Ovary (tissue), 10 donors: ENCODE measurements at regions of chr12 and their contacts with region 1.

Region 1: GRCh38 chr12:44728566-44728965 is 147.5 kb downstream of the NELL2 start:
- DNase-seq: no peak
- H3K4me3 ChIP-seq: no peak overlapping the region
- H3K27ac ChIP-seq: no peak overlapping the region
- H3K4me1 ChIP-seq: no peaks in the 10 kb centered on the region
- H3K27me3 ChIP-seq: no peaks in the 10 kb centered on the region
- CTCF ChIP-seq: no peak
- EP300 ChIP-seq: no peak
- POLR2A ChIP-seq: no peak

Region 2: DNA sequence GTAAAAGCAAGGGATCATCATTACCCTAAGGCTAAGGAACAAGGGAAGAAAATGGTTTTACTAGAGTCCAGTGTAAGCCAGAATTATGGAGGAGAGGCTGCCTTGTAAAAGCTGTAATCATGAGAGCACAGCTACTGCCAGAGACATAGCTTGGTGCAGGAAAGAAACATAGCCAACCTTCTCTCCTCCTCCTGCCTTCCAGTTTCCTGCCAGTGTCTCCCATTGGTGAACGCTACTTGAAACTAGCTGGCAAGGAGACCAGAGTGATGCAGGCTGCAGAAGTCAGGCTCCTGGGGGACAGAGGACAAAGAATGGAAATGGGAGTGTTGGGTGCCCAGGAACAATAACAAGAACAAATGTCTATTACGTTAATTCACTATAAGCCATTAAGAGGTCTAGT is 11.0 kb before region 1 on chr12:
- intact Hi-C with region 1: loop called in 1 of 4 experiments (anchors 2 kb)
- DNase-seq: no peak
- H3K4me3 ChIP-seq: no peak overlapping the region
- H3K27ac ChIP-seq: no peak overlapping the region
- H3K4me1 ChIP-seq: no peaks in the 10 kb centered on the region
- H3K27me3 ChIP-seq: no peaks in the 10 kb centered on the region
- CTCF ChIP-seq: no peak
- EP300 ChIP-seq: no peak
- POLR2A ChIP-seq: no peak